Dendritic cell treated with granulocyte-macrophage colony-stimulating factor and Interleukin-4, amounts not matched to agents 40 ng/mL and 50 ng/mL, for 4 days (primary cell): ENCODE measurements at regions of chr9 and their contacts with region 1.

Region 1: GRCh38 chr9:136245219-136246150 is at the start of gene QSOX2:
- H3K4me3 Mint-ChIP-seq: peak within 1 kb of the TSS; percentile 79
- H3K27ac Mint-ChIP-seq: peak within 1 kb of the TSS; percentile 67
- H3K4me1 Mint-ChIP-seq: peaks cover 40% of the 10 kb centered on the region
- H3K27me3 Mint-ChIP-seq: peaks cover 13% of the 10 kb centered on the region

Region 2: DNA sequence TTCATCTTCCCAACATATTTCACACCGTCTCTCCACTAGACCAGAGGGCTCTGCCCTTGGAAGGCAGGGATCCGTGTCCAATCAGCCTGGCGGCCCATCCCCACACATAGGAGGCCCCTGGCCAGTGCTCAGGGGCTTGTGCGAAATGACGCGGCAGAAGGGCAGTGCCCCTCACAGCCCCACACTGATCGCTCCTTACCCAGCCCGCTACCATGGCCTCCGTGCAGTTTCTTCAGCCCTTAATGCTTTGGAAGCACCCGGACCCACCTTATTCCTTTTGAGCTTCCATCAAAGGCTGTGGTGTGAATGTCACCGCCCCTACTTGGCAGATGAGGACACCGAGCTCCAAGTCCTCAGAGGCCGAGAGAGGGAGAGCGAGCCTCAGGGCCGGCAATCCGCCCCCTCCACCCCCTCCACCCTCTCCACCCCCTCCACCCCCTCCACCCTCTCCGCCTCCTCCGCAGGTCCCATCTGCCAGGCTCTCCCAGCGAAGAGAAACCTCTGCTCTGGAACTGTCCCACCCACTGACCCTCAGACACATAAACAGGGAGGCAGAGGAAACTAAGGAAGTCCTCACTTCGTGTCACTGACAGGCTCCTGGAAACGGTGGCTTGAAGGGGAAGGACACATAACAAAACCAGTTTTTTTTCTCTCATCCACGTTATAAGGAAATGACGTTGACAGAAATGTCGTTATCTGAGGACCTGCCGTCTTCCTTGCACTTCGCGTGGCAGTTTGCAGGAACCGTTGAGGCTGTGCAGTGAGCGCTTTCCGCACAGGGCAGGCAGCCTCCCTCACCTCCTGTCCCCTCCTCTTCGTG is 13.8 kb before region 1 on chr9:
- intact Hi-C with region 1: loop called (anchors 1 kb)
- H3K4me3 Mint-ChIP-seq: peak overlapping the region; percentile 61
- H3K27ac Mint-ChIP-seq: peak overlapping the region; percentile 75
- H3K4me1 Mint-ChIP-seq: peaks cover 47% of the 10 kb centered on the region
- H3K27me3 Mint-ChIP-seq: peaks cover 3% of the 10 kb centered on the region

Region 3: DNA sequence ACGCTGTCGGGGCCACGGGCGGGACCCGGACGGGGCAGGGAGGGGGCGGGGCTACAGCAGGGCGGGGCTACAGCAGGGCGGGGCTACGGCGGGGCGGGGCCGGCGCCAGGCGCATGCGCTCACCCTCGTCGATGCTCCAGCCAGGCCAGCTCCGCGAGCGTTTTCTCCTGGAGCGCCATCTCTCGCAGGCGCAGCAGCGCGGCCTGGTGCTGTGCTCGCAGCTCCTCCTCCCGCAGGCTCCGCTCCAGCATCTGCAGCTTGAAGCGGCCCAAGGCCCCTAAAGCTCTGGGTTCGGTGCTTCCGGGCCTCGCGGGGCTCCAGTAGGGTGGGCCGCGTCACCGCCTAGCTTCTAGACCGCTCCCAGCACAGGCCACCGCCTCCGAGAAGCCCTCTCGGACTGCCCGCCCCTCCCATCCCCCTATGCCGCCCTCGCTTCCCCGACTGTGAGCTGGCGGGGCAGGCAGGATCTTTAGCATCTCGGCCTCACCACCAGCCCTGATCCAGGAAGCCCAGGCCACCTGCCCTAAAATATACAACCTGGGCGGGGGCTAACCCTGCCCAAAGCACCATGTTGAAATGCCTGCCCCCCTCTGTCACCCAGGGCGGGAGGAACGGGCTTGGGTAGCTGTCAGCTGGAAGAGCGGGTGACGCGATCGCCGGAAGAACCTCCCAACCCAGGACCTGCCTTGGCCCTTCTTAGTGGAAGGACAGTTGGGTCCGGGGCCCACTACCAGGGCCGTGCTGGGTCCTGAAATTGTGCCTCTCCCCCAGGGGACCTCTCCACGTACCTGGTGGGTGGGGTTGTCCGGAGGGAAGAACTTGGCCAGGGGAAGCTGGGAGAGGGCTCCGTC is 22.0 kb after region 1 on chr9:
- intact Hi-C with region 1: loop called (anchors 1 kb)
- H3K4me3 Mint-ChIP-seq: peak overlapping the region; percentile 76
- H3K27ac Mint-ChIP-seq: peak overlapping the region; percentile 80
- H3K4me1 Mint-ChIP-seq: peaks cover 24% of the 10 kb centered on the region
- H3K27me3 Mint-ChIP-seq: peaks cover 27% of the 10 kb centered on the region